IMR-90 (cell line): ENCODE measurements at regions of chr7 and their contacts with region 1.

Region 1: GRCh38 chr7:154996752-154997151 is 6.2 kb downstream of the PAXIP1 start:
- DNase-seq: no peak
- ATAC-seq: no peak
- H3K4me3 ChIP-seq: no peak overlapping the region
- H3K27ac ChIP-seq: no peak overlapping the region
- H3K4me1 ChIP-seq: 0 out of 2 replicates have a peak, but pooled peaks cover under 1% of the 10 kb centered on the region
- H3K27me3 ChIP-seq: no peaks in the 10 kb centered on the region
- CTCF ChIP-seq: no peak
- POLR2A ChIP-seq: no peak
- RAD21 ChIP-seq: no peak

Region 2: DNA sequence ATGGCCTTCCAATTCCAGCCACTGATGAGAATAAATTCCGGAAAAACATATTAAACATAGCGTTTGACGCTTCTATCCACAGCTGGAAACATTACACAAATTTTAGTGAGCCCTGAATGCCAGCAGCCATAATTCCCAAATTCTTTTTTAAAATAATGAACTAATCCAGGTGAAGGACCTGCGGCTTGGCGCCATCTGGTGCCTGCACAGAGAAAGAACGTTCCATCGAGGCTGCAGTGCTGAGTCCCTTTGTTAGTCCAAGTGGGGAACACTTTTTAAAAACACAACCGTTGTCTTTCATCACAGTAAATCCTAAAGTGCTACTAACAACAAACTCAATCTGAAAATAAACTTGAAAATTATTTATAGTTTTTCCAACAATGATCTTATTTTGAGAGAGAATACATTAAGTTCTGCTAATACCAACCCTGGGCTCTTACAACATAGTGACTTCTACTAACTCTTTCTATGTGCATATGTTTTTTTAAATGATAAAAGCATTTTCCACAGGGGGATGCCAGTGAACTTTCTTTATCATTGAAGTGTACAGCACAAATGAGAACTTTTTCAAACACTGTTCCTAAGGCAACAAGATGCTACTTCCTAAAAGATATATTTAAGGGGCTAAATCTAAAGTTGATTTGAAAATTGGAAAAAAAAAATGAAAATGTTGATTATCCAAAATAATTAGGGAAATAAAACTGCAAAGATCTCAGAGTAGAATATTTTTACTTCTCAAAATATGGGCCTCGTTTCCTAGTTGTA is 1476.9 kb after region 1 on chr7:
- CTCF ChIA-PET with region 1: interaction called, 10 read pairs
- POLR2A ChIA-PET with region 1: no interaction called
- dilution Hi-C with region 1: no loop called
- in situ Hi-C with region 1: no loop called
- intact Hi-C with region 1: no loop called
- DNase-seq: peak; percentile 19
- ATAC-seq: peak; percentile 25; the same call in 1 of the 2 replicates
- H3K4me3 ChIP-seq: no peak overlapping the region
- H3K27ac ChIP-seq: no peak overlapping the region
- H3K4me1 ChIP-seq: peaks cover 11% of the 10 kb centered on the region
- H3K27me3 ChIP-seq: no peaks in the 10 kb centered on the region
- CTCF ChIP-seq: peak; percentile 58
- POLR2A ChIP-seq: no peak
- RAD21 ChIP-seq: peak; percentile 42